ENCODE measurements at regions of chr11 and their contacts with region 1.

Region 1: DNA sequence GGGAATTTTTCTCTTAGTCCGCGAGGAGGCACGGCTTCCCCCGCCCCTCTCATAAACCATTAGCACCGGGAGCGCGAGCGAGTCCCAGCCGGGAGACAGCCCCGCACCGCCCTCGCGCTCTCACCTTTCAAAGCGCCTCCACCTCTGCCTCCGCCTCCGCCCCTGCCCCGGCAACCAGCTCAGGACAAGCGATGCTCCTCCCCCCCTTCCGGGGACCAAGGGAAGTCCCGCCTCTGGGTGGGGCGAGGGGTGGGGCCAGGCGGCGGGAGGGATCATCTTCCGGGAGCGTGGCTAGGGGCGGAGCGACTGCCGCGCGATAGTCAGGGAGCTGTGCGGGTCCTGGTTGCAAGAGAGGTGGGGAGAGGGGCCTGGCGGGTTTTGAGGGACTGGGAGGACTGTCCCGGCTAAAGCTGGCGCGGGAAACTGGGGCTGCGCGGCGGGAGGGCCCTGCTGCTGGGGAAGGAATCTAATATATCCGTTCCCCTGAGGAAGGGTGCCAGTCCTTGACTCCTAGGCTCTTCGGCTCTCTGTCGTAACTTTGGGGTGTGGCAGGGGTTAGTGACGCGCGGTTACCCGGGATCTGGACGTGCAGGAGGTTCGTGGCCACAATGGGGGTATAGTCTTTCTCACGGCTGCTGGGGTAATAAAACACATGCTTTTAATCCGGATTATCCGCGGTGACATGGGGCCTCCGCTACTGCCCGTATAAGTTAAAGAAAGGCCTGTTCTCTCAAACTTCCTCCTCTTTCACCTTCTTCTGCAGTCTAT is at the starts of genes CCDC82 and JRKL:
- DNase-seq: peak; percentile 91
- ATAC-seq: peak; percentile 97
- H3K4me3 ChIP-seq: peak within 1 kb of the TSS; percentile 79 to 81 (median 80)
- H3K27ac ChIP-seq: peak within 1 kb of the TSS; percentile 78
- H3K4me1 ChIP-seq: peaks cover 51% of the 10 kb centered on the region
- H3K27me3 ChIP-seq: no peaks in the 10 kb centered on the region
- CTCF ChIP-seq: 0 out of 2 replicates have a peak, but pooled peaks have one; percentile 9
- EP300 ChIP-seq: 0 out of 4 replicates have a peak, but pooled peaks of 1 of the 2 experiments have one; percentile 36
- POLR2A ChIP-seq: peak; percentile 58 to 83
- RAD21 ChIP-seq: 0 out of 2 replicates have a peak, but pooled peaks have one; percentile 33
- total RNA-seq, gene CCDC82: 19.7 and 23.5 TPM in 2 replicates
- total RNA-seq, gene JRKL: 4.5 and 8.6 TPM in 2 replicates

Region 2: DNA sequence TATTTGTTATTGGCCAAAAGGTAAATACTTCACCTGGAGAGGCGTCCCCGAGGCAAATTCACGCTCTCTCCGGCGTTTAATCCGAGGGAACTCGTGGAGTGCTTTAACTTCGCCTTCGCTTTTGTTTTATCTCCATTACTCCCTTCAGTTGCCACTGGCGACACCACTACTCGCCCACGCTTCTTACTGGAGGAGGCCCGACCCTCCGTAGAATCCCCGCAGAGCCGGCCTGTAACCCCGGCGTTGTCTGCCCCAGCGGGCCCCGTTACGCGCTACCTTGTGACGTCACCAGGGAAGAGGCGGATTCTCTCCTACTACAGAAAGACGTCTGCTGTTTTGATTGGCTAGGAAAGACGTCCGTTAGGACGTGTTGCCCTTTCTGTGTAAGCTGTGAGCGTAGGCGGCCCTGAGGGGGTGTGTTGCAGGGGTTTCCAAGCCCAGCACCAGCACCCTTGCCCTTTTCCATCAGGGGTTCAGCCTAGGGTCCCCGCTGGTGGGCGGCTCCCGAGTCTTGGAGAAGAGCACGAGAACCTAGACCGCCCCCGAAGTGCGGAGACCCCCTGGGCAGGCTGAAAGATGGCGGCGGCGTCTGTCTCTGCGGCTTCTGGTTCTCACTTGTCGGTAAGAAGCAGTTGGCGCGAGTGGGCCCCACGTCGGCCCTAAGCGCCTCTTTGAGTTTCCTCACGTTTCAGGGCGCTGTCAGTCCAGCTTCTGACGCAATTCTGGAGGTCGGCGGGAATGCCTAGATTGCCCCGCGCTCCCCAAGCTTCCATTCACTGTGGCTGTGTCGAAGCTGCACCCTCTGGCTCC is 599.6 kb before region 1 on chr11 and contains the start of gene CEP57:
- CTCF ChIA-PET with region 1: no interaction called
- POLR2A ChIA-PET with region 1: interaction called, 25 read pairs
- in situ Hi-C with region 1: no loop called
- intact Hi-C with region 1: loop called (anchors 1 kb)
- DNase-seq: peak; percentile 98
- ATAC-seq: peak; percentile 84
- H3K4me3 ChIP-seq: peak within 1 kb of the TSS; percentile 87 to 98 (median 97)
- H3K27ac ChIP-seq: peak within 1 kb of the TSS; percentile 98
- H3K4me1 ChIP-seq: peaks cover 54% of the 10 kb centered on the region
- H3K27me3 ChIP-seq: no peaks in the 10 kb centered on the region; a peak in 1 of 5 replicates
- CTCF ChIP-seq: no peak
- EP300 ChIP-seq: no peak; a peak in 1 of 4 replicates
- POLR2A ChIP-seq: peak; percentile 8 to 61; a peak in 3 of 4 replicates
- RAD21 ChIP-seq: peak; percentile 5; the same call in 1 of the 2 replicates
- total RNA-seq, gene CEP57: 59.4 and 85.6 TPM in 2 replicates

Region 3: GRCh38 chr11:95849087-95849825 is 540.6 kb before region 1 on chr11:
- CTCF ChIA-PET with region 1: interaction called, 4 read pairs
- POLR2A ChIA-PET with region 1: interaction called, 4 read pairs
- in situ Hi-C with region 1: no loop called
- intact Hi-C with region 1: loop called (anchors 1 kb)
- DNase-seq: peak; percentile 64
- ATAC-seq: peak; percentile 97
- H3K4me3 ChIP-seq: no peak overlapping the region
- H3K27ac ChIP-seq: no peak overlapping the region
- H3K4me1 ChIP-seq: no peaks in the 10 kb centered on the region
- H3K27me3 ChIP-seq: no peaks in the 10 kb centered on the region
- CTCF ChIP-seq: peak; percentile 75
- EP300 ChIP-seq: no peak
- POLR2A ChIP-seq: no peak
- RAD21 ChIP-seq: no peak

Region 4: DNA sequence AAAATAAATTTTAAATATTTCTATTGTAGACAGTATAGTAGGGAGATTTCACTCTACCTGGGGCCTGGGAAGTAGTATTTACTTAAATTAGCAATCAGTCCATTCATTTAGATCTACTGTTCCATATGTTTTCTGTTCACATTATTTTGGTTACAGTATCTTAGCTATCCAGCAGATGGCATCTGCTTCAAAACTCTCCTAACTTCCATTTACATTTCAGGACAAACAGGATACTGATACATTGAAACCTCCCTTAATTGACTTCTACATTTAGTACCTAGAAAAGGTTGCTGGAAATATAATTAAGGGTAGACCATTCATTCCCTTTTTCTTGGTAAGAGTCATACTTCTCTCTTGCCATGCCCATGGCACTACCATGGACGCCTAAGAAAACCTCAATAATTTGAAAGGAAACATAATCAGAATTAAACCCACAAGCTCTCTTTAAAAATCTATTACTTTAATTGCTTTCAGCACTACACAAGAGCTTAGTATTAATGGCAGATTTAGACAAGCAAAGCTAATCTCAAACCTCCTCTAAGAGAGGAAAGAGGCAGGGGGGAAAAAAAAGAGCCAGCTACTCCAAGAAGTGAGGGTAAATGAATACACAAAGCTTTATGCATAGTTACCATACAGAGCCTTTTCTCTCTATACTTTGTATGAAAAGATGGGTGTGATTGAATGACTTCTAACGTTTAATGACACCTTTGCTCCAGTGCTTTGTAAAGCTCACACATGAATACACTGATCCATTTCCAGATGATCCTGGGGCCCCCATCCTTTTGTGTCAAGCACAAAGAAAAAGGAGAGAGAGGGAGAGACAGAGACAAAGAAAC is 334.8 kb before region 1 on chr11:
- CTCF ChIA-PET with region 1: interaction called, 3 read pairs
- POLR2A ChIA-PET with region 1: no interaction called
- in situ Hi-C with region 1: no loop called
- intact Hi-C with region 1: loop called (anchors 2 kb)
- DNase-seq: peak; percentile 44
- ATAC-seq: peak; percentile 47
- H3K4me3 ChIP-seq: no peak overlapping the region
- H3K27ac ChIP-seq: peak overlapping the region; percentile 7
- H3K4me1 ChIP-seq: peaks cover 57% of the 10 kb centered on the region
- H3K27me3 ChIP-seq: no peaks in the 10 kb centered on the region
- CTCF ChIP-seq: peak; percentile 65
- EP300 ChIP-seq: no peak
- POLR2A ChIP-seq: no peak
- RAD21 ChIP-seq: peak; percentile 50; the same call in 1 of the 2 replicates

Region 5: DNA sequence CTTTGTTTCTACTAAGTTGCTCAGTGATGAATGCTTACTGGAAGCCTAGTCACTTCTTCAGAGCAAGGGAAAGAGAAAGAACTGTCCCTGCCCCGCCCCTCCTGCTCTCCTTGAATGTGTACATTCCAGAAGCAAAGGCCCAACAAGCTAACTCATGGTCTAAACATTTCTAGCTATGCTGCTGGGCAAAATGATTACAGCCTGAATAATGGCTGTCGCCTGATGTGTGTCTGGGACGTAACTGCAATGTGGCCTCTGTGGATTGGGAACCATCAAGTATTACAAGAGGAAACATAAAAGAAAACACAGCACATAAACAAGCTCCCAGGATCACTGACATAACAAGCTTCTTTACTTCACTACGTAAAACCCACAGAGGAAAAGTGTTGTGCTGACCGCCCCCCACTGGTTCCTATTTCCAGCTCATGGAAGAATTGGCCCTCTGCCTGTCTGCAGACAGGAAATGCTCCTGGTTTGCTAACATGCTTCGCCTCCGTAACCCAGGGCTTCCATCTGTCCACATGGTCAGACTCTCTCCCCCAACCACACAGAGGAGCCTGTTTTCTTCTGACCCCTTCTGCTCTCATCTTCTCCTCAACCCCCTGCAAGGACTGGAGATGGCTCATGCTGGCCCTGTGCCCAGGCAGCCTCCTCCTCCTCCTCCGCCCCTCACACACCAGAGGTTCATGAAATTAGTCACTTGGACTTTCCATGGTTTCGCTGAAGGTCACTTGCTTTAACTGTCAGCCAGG is 234.1 kb before region 1 on chr11:
- CTCF ChIA-PET with region 1: no interaction called
- POLR2A ChIA-PET with region 1: no interaction called
- in situ Hi-C with region 1: no loop called
- intact Hi-C with region 1: no loop called
- DNase-seq: peak; percentile 64
- ATAC-seq: peak; percentile 83
- H3K4me3 ChIP-seq: no peak overlapping the region
- H3K27ac ChIP-seq: peak overlapping the region; percentile 60
- H3K4me1 ChIP-seq: peaks cover 47% of the 10 kb centered on the region
- H3K27me3 ChIP-seq: no peaks in the 10 kb centered on the region
- CTCF ChIP-seq: peak; percentile 54
- EP300 ChIP-seq: no peak
- POLR2A ChIP-seq: no peak
- RAD21 ChIP-seq: no peak

Region 6: DNA sequence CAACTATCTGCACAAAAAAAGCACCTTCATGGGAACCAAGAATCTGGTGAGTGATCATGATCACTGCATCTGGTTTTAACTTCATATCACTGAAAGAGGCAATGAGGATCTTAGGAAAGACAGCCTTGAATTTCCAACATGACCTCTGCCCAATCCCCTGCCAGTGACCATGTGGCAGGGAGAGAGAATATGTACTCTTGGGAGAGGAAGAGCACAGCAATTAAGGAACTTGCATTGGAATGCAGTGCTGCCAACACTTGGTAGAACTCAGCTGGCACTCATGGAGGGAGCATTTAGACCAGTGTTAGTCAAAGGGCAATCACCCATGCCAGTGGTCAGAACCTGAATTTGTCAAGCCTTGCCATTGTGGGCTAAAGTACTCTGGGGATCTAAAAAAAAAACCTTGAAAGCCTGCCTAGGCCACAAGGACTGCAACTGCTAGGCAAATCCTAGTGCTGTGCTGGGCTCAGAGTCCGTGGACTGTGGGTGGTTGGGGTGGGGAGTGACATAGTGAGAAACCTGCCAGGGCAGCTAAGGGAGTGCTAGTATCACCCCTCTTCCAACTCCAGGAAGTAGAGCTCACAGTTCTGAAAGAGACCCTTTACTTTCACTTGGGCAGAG is 23.0 kb after region 1 on chr11:
- CTCF ChIA-PET with region 1: no interaction called
- POLR2A ChIA-PET with region 1: interaction called, 10 read pairs
- in situ Hi-C with region 1: no loop called
- intact Hi-C with region 1: no loop called
- DNase-seq: peak; percentile 12
- ATAC-seq: peak; percentile 92
- H3K4me3 ChIP-seq: peak overlapping the region in 1 of 3 experiments; percentile 36; a peak in 2 of 6 replicates
- H3K27ac ChIP-seq: no peak overlapping the region
- H3K4me1 ChIP-seq: peaks cover 26% of the 10 kb centered on the region
- H3K27me3 ChIP-seq: no peaks in the 10 kb centered on the region
- CTCF ChIP-seq: no peak
- EP300 ChIP-seq: no peak
- POLR2A ChIP-seq: no peak
- RAD21 ChIP-seq: no peak